ENCODE measurements at regions of chr12 and their contacts with region 1.

Region 1: GRCh38 chr12:70590051-70590450 is 47.2 kb downstream of the PTPRB start:
- DNase-seq: peak; percentile 84
- H3K4me3 Mint-ChIP-seq: no peak overlapping the region
- H3K27ac Mint-ChIP-seq: peak overlapping the region; percentile 11
- H3K4me1 Mint-ChIP-seq: peaks cover 17% of the 10 kb centered on the region
- H3K27me3 Mint-ChIP-seq: no peaks in the 10 kb centered on the region
- CTCF ChIP-seq: peak; percentile 86

Region 2: GRCh38 chr12:70609711-70610491 is 19.9 kb after region 1 on chr12:
- CTCF ChIA-PET with region 1: interaction called, 11 read pairs
- intact Hi-C with region 1: no loop called
- DNase-seq: peak; percentile 62
- H3K4me3 Mint-ChIP-seq: peak overlapping the region; percentile 62
- H3K27ac Mint-ChIP-seq: peak overlapping the region; percentile 40
- H3K4me1 Mint-ChIP-seq: peaks cover 46% of the 10 kb centered on the region
- H3K27me3 Mint-ChIP-seq: no peaks in the 10 kb centered on the region
- CTCF ChIP-seq: no peak

Region 3: GRCh38 chr12:70719672-70720420 is 129.8 kb after region 1 on chr12:
- CTCF ChIA-PET with region 1: interaction called, 4 read pairs
- intact Hi-C with region 1: loop called (anchors 1 kb)
- DNase-seq: peak; percentile 41
- H3K4me3 Mint-ChIP-seq: no peak overlapping the region
- H3K27ac Mint-ChIP-seq: no peak overlapping the region
- H3K4me1 Mint-ChIP-seq: no peaks in the 10 kb centered on the region
- H3K27me3 Mint-ChIP-seq: no peaks in the 10 kb centered on the region
- CTCF ChIP-seq: peak; percentile 88

Region 4: GRCh38 chr12:70823182-70823976 is 233.3 kb after region 1 on chr12:
- CTCF ChIA-PET with region 1: no interaction called
- intact Hi-C with region 1: loop called (anchors 2 kb)
- DNase-seq: peak; percentile 42
- H3K4me3 Mint-ChIP-seq: no peak overlapping the region
- H3K27ac Mint-ChIP-seq: peak overlapping the region; percentile 0
- H3K4me1 Mint-ChIP-seq: peaks cover 22% of the 10 kb centered on the region
- H3K27me3 Mint-ChIP-seq: no peaks in the 10 kb centered on the region
- CTCF ChIP-seq: peak; percentile 17